MCF 10A (cell line): ENCODE measurements at regions of chr9 and their contacts with region 1.

Region 1: DNA sequence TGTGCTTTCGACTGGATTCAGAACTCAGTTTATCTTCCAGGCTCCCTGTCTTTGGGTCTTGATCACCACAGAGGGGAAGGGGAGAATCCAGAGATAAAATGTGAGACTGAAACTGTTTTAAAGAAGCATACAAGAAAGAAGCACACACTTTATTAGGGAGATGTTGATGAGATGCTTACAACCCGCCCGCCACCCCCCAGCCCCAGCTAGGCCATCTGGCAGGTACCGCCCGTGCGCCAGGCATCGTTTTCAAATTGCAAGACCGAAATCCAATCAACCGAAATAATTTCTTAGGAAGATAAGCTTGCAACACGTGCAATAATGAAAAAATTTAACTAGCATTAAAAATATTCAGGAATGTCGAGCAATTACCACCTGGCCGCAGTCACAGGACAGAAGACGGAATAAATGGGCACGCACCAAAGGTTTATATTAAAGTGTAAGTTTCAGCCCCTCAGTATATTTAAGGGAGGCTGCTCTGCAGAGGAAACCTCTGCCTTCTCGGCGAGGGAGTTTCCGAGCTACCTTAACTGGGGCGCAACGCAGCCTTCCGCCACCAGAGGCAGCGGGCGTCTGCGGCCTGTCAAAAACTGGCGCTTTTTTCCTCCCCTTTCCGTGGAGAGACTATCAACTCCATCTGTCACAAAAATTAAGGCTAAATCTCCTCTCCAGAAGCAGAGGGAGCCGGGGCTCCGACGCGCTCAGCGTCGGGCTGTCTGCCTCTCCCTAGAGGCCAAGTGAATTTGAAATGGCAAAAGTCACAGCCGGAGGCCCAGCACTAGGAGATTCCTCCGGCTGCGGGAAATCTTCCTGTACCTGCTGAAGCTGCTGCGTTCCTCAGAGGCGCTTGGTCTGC is 996 bp upstream of the GAS1 start:
- DNase-seq: peak; percentile 85
- H3K4me3 Mint-ChIP-seq: peak overlapping the region; percentile 98
- H3K27ac Mint-ChIP-seq: peak overlapping the region; percentile 91
- H3K4me1 Mint-ChIP-seq: peaks cover 6% of the 10 kb centered on the region
- H3K27me3 Mint-ChIP-seq: no peaks in the 10 kb centered on the region
- CTCF ChIP-seq: peak; percentile 77

Region 2: GRCh38 chr9:86434039-86434726 is 514.1 kb before region 1 on chr9:
- CTCF ChIA-PET with region 1: interaction called, 9 read pairs
- POLR2A ChIA-PET with region 1: interaction called, 3 read pairs
- intact Hi-C with region 1: loop called (anchors 1 kb)
- DNase-seq: peak; percentile 56
- H3K4me3 Mint-ChIP-seq: no peak overlapping the region
- H3K27ac Mint-ChIP-seq: no peak overlapping the region
- H3K4me1 Mint-ChIP-seq: peaks cover 13% of the 10 kb centered on the region
- H3K27me3 Mint-ChIP-seq: no peaks in the 10 kb centered on the region
- CTCF ChIP-seq: peak; percentile 73

Region 3: GRCh38 chr9:86637515-86637914 is 310.8 kb before region 1 on chr9:
- CTCF ChIA-PET with region 1: interaction called, 4 read pairs
- POLR2A ChIA-PET with region 1: interaction called, 3 read pairs
- intact Hi-C with region 1: loop called (anchors 2 kb)
- DNase-seq: peak; percentile 26
- H3K4me3 Mint-ChIP-seq: no peak overlapping the region
- H3K27ac Mint-ChIP-seq: no peak overlapping the region
- H3K4me1 Mint-ChIP-seq: no peaks in the 10 kb centered on the region
- H3K27me3 Mint-ChIP-seq: no peaks in the 10 kb centered on the region
- CTCF ChIP-seq: peak; percentile 77

Region 4: GRCh38 chr9:86983260-86984255 is 35.3 kb after region 1 on chr9:
- CTCF ChIA-PET with region 1: interaction called, 11 read pairs
- POLR2A ChIA-PET with region 1: interaction called, 174 read pairs
- intact Hi-C with region 1: loop called (anchors 1 kb)
- DNase-seq: peak; percentile 97
- H3K4me3 Mint-ChIP-seq: peak overlapping the region; percentile 46
- H3K27ac Mint-ChIP-seq: peak overlapping the region; percentile 97
- H3K4me1 Mint-ChIP-seq: peaks cover 64% of the 10 kb centered on the region
- H3K27me3 Mint-ChIP-seq: no peaks in the 10 kb centered on the region
- CTCF ChIP-seq: no peak

Region 5: GRCh38 chr9:87080512-87081264 is 132.4 kb after region 1 on chr9:
- CTCF ChIA-PET with region 1: no interaction called
- POLR2A ChIA-PET with region 1: no interaction called
- intact Hi-C with region 1: loop called (anchors 1 kb)
- DNase-seq: peak; percentile 43
- H3K4me3 Mint-ChIP-seq: no peak overlapping the region
- H3K27ac Mint-ChIP-seq: no peak overlapping the region
- H3K4me1 Mint-ChIP-seq: no peaks in the 10 kb centered on the region
- H3K27me3 Mint-ChIP-seq: no peaks in the 10 kb centered on the region
- CTCF ChIP-seq: no peak

Region 6: GRCh38 chr9:87212560-87213159 is 264.4 kb after region 1 on chr9:
- CTCF ChIA-PET with region 1: no interaction called
- POLR2A ChIA-PET with region 1: interaction called, 8 read pairs
- intact Hi-C with region 1: loop called (anchors 5 kb)
- DNase-seq: peak; percentile 94
- H3K4me3 Mint-ChIP-seq: no peak overlapping the region
- H3K27ac Mint-ChIP-seq: peak overlapping the region; percentile 76
- H3K4me1 Mint-ChIP-seq: peaks cover 17% of the 10 kb centered on the region
- H3K27me3 Mint-ChIP-seq: no peaks in the 10 kb centered on the region
- CTCF ChIP-seq: no peak